ENCODE measurements at regions of chr17 and their contacts with region 1.

Region 1: GRCh38 chr17:30124273-30124796 is 7.7 kb downstream of the NSRP1 start:
- DNase-seq: no peak
- H3K4me3 ChIP-seq: no peak overlapping the region
- H3K27ac ChIP-seq: no peak overlapping the region
- H3K4me1 ChIP-seq: no peaks in the 10 kb centered on the region
- H3K27me3 ChIP-seq: no peaks in the 10 kb centered on the region
- CTCF ChIP-seq: no peak
- POLR2A ChIP-seq: no peak

Region 2: DNA sequence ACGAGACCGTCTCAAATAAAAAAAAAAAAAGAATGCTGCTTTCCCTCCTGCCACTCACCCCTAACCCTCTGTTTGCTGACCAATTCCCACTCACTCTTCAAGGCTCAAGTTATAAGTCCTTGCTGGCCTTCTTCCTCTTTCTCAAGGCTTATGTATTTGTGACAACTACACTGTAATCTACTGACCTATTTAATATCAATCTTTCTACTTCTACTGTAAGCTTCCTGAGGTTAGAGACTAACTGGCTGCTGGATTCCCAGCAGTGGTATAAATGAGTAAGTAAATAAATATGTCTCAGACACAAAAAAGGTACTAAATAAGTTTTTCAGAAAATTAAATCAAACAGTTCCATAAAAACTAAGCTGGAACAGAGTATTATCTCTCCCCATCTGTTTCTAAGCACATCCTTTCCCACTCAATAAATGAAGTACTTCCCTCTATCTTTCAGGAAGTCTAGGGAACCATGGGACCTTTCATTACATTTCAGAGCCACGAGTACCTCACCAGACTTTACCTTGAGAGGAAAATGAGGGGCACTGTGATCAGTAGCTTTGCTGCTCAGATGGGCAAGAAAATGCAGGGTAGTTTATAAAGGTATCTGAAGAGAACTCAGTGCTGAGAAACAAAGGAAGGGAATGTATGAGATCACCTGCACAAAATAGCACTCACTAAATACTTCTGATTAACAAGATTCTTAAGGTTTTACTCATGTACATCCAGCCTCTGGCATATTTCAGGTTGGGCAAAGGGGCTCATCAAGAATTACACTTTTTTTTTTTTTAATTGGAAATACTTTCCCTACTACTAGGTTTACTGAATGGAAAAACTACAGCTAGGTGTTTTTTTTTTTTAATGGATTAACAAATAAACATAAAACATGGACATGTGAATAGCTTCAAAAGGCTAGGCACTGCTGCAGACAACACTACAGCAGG is 205.1 kb before region 1 on chr17:
- intact Hi-C with region 1: no loop called
- DNase-seq: no peak
- H3K4me3 ChIP-seq: no peak overlapping the region
- H3K27ac ChIP-seq: no peak overlapping the region
- H3K4me1 ChIP-seq: no peaks in the 10 kb centered on the region
- H3K27me3 ChIP-seq: no peaks in the 10 kb centered on the region
- CTCF ChIP-seq: no peak
- POLR2A ChIP-seq: no peak

Region 3: DNA sequence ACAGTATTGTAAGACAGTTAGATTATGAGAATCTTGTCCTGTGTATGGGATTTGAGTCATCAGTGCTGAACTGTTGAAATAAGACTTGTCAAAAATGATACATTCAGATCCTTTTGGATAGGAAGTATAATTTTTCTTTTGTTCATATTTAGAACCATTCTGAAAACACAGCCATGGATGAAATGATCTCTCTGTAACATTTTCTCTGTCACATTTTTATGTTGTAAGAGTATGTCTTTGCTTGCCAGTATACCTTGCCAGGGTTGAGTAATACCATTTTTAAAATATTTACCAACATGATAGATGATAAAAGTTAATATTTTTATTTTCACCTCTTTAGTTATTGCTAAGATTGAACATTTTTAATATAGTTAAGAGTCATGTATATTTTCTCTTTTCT is 37.3 kb after region 1 on chr17:
- intact Hi-C with region 1: no loop called
- DNase-seq: no peak
- H3K4me3 ChIP-seq: no peak overlapping the region
- H3K27ac ChIP-seq: peak overlapping the region in 1 of 2 donors; percentile 34
- H3K4me1 ChIP-seq: peaks cover 3% of the 10 kb centered on the region
- H3K27me3 ChIP-seq: no peaks in the 10 kb centered on the region
- CTCF ChIP-seq: no peak
- POLR2A ChIP-seq: no peak

Region 4: GRCh38 chr17:30173649-30174048 is 49.3 kb after region 1 on chr17:
- intact Hi-C with region 1: no loop called
- DNase-seq: no peak
- H3K4me3 ChIP-seq: no peak overlapping the region
- H3K27ac ChIP-seq: no peak overlapping the region
- H3K4me1 ChIP-seq: no peaks in the 10 kb centered on the region
- H3K27me3 ChIP-seq: no peaks in the 10 kb centered on the region
- CTCF ChIP-seq: no peak
- POLR2A ChIP-seq: no peak

Region 5: GRCh38 chr17:30278032-30278431 is 153.7 kb after region 1 on chr17:
- intact Hi-C with region 1: loop called (anchors 10 kb)
- DNase-seq: peak; percentile 76
- H3K4me3 ChIP-seq: no peak overlapping the region
- H3K27ac ChIP-seq: no peak overlapping the region
- H3K4me1 ChIP-seq: no peaks in the 10 kb centered on the region
- H3K27me3 ChIP-seq: no peaks in the 10 kb centered on the region
- CTCF ChIP-seq: peak; percentile 28 to 47 (median 39)
- POLR2A ChIP-seq: no peak

Measured in testis (tissue), 5 donors.